ENCODE measurements at regions of chr17 and their contacts with region 1.

Region 1: GRCh38 chr17:58200017-58200633 is 7.6 kb downstream of the EPX start:
- DNase-seq: peak; percentile 73
- H3K4me3 Mint-ChIP-seq: no peak overlapping the region
- H3K27ac Mint-ChIP-seq: no peak overlapping the region
- H3K4me1 Mint-ChIP-seq: no peaks in the 10 kb centered on the region
- H3K27me3 Mint-ChIP-seq: peaks cover 43% of the 10 kb centered on the region

Region 2: DNA sequence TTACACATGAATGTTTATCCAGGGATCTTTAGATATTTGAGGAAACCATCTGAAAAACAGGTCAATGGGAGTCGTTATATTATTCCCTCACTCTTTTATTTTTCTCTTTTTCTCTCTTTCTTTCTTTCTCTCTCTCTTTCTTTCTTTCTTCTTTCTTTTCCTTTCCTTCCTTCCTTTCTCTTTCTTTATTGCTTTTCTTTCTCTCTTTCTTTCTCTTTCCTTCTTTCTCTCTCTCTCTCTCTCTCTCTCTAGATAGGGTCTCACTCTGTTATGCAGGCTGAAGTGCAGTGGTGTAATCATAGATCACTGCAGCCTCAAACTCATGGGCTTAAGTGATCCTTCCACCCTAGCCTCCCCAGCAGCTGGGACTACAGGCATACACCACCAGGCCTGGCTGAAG is 72.3 kb before region 1 on chr17:
- CTCF ChIA-PET with region 1: no interaction called
- DNase-seq: no peak
- H3K4me3 Mint-ChIP-seq: no peak overlapping the region
- H3K27ac Mint-ChIP-seq: no peak overlapping the region
- H3K4me1 Mint-ChIP-seq: no peaks in the 10 kb centered on the region
- H3K27me3 Mint-ChIP-seq: peaks cover 33% of the 10 kb centered on the region

Region 3: GRCh38 chr17:58215685-58216084 is 15.6 kb after region 1 on chr17:
- CTCF ChIA-PET with region 1: interaction called, 17 read pairs
- DNase-seq: no peak
- H3K4me3 Mint-ChIP-seq: no peak overlapping the region
- H3K27ac Mint-ChIP-seq: no peak overlapping the region
- H3K4me1 Mint-ChIP-seq: peaks cover 29% of the 10 kb centered on the region
- H3K27me3 Mint-ChIP-seq: no peaks in the 10 kb centered on the region

Region 4: DNA sequence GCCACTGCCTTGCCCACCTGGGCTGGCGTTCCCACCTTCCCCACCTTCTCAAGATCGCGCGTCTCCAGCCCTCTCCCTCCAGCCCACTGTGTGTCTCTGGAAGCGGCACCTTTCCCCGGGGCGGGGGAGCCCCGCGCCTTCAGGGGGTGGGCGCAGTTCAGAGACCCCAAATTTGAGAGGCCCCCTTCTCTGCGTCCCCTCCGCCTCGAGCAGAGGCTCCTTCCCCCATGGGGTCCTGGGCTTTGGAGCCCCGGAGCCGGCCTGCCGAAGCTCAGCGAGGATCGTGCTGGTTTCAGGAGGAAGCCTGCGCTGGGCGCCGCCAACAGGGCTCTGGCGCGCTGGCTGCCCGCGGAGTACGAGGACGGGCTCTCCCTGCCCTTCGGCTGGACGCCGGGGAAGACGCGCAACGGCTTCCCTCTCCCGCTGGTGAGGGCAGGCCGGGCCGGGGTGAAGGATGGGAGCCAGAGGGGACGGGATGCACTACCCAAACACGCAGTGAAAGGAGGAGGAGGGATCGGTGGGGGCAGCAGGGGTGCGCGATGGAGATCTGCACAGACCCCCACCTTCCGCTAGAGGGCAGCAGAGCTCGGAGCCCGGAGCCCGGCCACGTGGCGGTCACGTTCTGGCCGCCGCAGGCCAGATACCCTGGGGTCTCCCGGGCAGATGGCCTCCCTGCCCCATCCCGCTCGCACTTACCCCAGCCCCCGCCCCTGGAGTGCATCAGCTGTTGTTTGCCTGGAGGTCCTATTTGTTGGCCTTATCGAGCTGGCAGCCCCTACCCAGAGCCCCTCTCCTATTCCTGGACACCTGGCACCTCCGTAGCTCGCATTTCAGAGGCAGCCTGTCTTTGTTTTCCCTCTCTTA is 49.4 kb after region 1 on chr17:
- CTCF ChIA-PET with region 1: interaction called, 11 read pairs
- DNase-seq: peak; percentile 79
- H3K4me3 Mint-ChIP-seq: peak overlapping the region; percentile 64
- H3K27ac Mint-ChIP-seq: no peak overlapping the region
- H3K4me1 Mint-ChIP-seq: peaks cover 26% of the 10 kb centered on the region
- H3K27me3 Mint-ChIP-seq: peaks cover 84% of the 10 kb centered on the region

Region 5: DNA sequence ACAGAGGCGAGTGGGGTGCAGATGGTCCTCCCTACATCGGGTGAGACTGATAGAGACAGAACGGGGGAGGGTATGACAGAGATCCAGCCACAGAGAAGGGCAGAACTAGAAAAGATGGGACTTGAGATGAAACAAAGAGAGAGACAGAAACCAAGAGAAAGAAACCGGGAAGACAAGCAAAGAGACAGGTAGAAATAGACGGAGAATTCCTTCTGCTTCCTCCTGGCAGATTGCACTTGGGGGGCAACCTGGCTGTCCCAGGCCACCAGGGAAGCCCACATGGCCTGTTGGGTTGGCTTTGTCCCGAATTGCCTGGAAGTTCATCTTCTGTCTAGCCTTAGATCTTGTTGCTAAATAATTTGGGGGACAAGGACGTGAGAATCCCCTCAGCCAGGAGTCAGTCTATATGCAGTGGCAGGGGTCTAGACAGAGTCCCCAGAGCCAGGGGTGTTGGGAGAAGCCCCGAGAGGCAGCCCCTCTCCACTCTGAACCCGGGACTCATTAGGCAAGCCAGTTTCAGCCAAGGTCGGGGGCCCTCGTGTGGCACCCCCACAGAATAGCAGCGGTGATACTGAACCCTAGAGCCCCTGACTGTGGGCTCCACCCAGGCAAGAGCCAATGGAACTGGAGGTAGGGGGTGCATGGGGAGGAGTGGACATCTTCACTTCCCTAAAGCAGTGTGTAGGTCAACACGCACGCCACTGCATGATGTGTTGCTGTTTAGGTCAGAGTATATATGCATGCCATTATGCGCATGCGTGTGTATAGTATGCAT is 129.1 kb after region 1 on chr17:
- CTCF ChIA-PET with region 1: no interaction called
- DNase-seq: peak; percentile 85
- H3K4me3 Mint-ChIP-seq: peak overlapping the region; percentile 99
- H3K27ac Mint-ChIP-seq: peak overlapping the region; percentile 87
- H3K4me1 Mint-ChIP-seq: peaks cover 30% of the 10 kb centered on the region
- H3K27me3 Mint-ChIP-seq: peaks cover 38% of the 10 kb centered on the region

Region 6: DNA sequence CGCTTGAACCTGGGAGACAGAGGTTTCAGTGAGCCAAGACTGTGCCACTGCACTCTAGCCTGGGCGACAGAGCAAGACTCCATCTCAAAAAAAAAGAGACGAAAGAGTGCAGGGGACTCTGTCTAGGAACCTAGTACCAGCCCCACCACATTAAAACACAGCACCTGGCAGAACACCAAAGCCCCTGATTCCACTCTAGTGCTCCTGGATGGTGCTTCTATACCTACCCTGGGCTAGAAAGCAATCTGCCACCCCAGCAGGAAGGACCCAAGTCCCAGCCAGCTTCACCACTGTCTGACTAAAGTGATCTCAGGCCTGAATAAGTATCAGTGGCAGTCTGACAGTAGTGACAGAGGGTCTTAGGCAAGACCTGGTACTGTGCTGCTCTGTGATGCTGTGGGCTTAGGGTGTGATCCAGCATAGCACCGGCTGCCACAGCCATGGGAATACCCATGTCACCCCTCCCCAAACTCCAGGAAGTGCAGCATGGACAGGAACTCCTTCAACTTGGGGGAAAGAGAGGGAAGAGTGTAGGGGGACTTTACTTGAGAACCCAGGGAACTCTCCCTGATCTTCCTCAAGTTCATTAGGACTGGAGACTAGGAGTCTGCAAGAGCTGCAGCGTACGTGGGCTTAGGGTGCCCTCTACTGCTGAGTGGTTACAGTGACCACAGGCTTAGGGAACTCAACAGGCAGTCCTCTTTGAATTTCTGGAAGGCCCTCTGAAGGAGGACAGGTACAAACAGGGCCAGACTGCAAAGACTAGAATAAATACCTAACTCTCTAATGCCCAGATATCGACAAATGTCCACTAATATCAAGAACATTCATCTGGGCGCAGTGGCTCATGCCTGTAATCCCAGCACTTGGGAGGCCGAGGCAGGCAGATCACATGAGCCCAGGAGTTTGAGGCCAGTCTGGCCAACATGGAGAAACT is 247.2 kb after region 1 on chr17:
- CTCF ChIA-PET with region 1: interaction called, 30 read pairs
- DNase-seq: peak; percentile 86
- H3K4me3 Mint-ChIP-seq: no peak overlapping the region
- H3K27ac Mint-ChIP-seq: no peak overlapping the region
- H3K4me1 Mint-ChIP-seq: peaks cover 4% of the 10 kb centered on the region
- H3K27me3 Mint-ChIP-seq: no peaks in the 10 kb centered on the region

Measured in activated naive CD4-positive, alpha-beta T cell treated with anti-CD3 and anti-CD28 coated beads, Interleukin-2, amount 10 ng/mL, durations not matched to agents 7 days and 5 days (primary cell).